Activated naive CD8-positive, alpha-beta T cell treated with anti-CD3 and anti-CD28 coated beads, Interleukin-2, amount 10 ng/mL, durations not matched to agents 7 days and 5 days (primary cell): ENCODE measurements at regions of chr6 and their contacts with region 1.

Region 1: GRCh38 chr6:26234421-26235296 is 130.3 kb upstream of the BTN3A2 start:
- DNase-seq: peak; percentile 76
- ATAC-seq: peak; percentile 59
- H3K4me3 Mint-ChIP-seq: peak overlapping the region; percentile 94
- H3K27ac Mint-ChIP-seq: peak overlapping the region; percentile 100
- H3K4me1 Mint-ChIP-seq: peaks cover 36% of the 10 kb centered on the region
- H3K27me3 Mint-ChIP-seq: no peaks in the 10 kb centered on the region

Region 2: GRCh38 chr6:26054857-26055669 is 179.6 kb before region 1 on chr6:
- POLR2A ChIA-PET with region 1: interaction called, 43 read pairs
- DNase-seq: peak; percentile 81
- ATAC-seq: peak; percentile 69
- H3K4me3 Mint-ChIP-seq: peak overlapping the region; percentile 96
- H3K27ac Mint-ChIP-seq: peak overlapping the region; percentile 100
- H3K4me1 Mint-ChIP-seq: peaks cover 32% of the 10 kb centered on the region
- H3K27me3 Mint-ChIP-seq: no peaks in the 10 kb centered on the region

Region 3: GRCh38 chr6:26196846-26197648 is 37.6 kb before region 1 on chr6:
- POLR2A ChIA-PET with region 1: interaction called, 494 read pairs
- DNase-seq: peak; percentile 83
- ATAC-seq: peak; percentile 44
- H3K4me3 Mint-ChIP-seq: peak overlapping the region; percentile 87
- H3K27ac Mint-ChIP-seq: peak overlapping the region; percentile 96
- H3K4me1 Mint-ChIP-seq: peaks cover 48% of the 10 kb centered on the region
- H3K27me3 Mint-ChIP-seq: no peaks in the 10 kb centered on the region

Region 4: DNA sequence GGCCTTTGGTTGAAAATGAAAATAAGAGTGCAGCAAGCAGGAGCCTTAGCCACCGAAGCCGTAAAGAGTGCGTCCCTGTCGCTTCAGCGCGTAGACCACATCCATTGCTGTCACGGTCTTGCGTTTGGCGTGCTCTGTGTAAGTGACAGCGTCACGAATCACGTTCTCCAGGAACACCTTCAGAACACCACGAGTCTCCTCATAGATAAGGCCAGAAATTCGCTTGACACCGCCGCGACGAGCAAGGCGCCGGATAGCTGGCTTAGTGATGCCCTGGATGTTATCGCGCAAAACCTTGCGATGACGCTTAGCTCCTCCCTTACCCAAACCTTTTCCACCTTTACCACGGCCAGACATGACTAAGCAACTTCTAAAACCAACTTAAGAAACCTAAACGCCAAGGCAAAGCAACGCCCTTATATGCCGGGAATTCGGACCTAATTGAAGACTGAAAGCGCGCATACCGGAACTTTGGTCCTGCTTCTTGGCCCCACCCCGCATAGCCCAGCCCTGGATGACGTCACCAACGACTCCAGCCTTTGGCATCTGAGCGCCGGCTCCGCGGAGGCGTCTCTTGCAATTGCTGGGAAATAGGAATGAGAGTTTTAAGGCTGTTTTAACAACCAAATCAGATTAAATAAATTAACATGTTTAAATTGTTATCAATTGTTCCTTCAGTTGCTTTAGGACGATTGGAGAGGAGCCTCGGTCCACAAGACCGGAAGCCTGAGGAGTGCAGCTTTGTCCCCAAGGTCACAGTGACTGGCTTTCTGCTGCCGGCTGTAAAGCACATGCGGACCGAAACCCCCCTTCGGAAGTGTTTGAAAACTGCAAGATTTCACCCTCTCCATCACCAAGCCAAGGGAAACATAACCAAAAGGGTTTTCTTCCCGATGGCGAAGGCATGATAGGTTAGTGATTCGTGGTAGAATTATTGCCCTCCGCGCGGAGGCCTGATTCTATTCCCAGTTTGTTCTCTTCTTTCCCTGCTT is 50.8 kb after region 1 on chr6:
- POLR2A ChIA-PET with region 1: interaction called, 74 read pairs
- DNase-seq: peak; percentile 87
- ATAC-seq: peak; percentile 79
- H3K4me3 Mint-ChIP-seq: peak overlapping the region; percentile 72
- H3K27ac Mint-ChIP-seq: peak overlapping the region; percentile 92
- H3K4me1 Mint-ChIP-seq: peaks cover 37% of the 10 kb centered on the region
- H3K27me3 Mint-ChIP-seq: peaks cover 3% of the 10 kb centered on the region

Region 5: GRCh38 chr6:26375270-26375669 is 140.6 kb after region 1 on chr6:
- POLR2A ChIA-PET with region 1: no interaction called
- DNase-seq: no peak
- ATAC-seq: peak; percentile 26
- H3K4me3 Mint-ChIP-seq: no peak overlapping the region
- H3K27ac Mint-ChIP-seq: peak overlapping the region; percentile 90
- H3K4me1 Mint-ChIP-seq: peaks cover 15% of the 10 kb centered on the region
- H3K27me3 Mint-ChIP-seq: no peaks in the 10 kb centered on the region

Region 6: DNA sequence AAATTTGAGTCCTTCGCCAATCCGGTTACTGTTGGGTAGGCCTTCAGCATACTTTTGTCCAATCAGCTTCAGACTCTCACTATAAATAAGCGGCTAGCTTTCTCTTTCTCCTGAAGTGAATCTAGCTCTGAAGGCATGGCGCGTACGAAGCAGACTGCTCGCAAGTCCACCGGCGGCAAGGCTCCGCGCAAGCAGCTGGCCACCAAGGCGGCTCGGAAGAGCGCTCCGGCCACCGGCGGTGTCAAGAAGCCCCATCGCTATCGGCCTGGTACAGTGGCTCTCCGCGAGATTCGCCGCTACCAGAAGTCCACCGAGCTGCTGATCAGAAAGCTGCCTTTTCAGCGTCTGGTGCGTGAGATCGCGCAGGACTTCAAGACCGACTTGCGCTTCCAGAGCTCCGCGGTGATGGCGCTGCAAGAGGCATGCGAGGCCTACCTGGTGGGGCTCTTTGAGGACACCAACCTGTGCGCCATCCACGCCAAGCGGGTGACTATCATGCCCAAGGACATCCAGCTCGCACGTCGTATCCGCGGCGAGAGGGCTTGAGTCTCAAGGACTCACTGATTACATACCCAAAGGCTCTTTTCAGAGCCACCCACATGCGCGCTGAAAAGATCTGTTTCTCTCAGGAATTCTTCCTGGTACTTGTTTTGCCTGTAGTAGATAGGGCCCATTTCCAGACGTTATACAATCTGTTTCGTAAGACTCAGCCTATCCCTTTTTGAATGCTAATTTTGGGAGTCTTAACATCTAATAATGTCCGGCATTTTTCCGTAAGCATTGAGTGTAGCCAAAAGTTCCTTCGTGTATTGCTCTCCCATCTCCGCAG is 1575.5 kb after region 1 on chr6:
- POLR2A ChIA-PET with region 1: interaction called, 30 read pairs
- DNase-seq: peak; percentile 83
- ATAC-seq: peak; percentile 38
- H3K4me3 Mint-ChIP-seq: peak overlapping the region; percentile 89
- H3K27ac Mint-ChIP-seq: peak overlapping the region; percentile 97
- H3K4me1 Mint-ChIP-seq: peaks cover 52% of the 10 kb centered on the region
- H3K27me3 Mint-ChIP-seq: no peaks in the 10 kb centered on the region